Right ventricle myocardium inferior (tissue), 1 donor: ENCODE measurements at regions of chr12 and their contacts with region 1.

Region 1: GRCh38 chr12:32755654-32756475 is at the start of gene YARS2:
- DNase-seq: peak; percentile 96
- ATAC-seq: peak; percentile 100
- total RNA-seq, gene YARS2: 9.7 TPM

Region 2: DNA sequence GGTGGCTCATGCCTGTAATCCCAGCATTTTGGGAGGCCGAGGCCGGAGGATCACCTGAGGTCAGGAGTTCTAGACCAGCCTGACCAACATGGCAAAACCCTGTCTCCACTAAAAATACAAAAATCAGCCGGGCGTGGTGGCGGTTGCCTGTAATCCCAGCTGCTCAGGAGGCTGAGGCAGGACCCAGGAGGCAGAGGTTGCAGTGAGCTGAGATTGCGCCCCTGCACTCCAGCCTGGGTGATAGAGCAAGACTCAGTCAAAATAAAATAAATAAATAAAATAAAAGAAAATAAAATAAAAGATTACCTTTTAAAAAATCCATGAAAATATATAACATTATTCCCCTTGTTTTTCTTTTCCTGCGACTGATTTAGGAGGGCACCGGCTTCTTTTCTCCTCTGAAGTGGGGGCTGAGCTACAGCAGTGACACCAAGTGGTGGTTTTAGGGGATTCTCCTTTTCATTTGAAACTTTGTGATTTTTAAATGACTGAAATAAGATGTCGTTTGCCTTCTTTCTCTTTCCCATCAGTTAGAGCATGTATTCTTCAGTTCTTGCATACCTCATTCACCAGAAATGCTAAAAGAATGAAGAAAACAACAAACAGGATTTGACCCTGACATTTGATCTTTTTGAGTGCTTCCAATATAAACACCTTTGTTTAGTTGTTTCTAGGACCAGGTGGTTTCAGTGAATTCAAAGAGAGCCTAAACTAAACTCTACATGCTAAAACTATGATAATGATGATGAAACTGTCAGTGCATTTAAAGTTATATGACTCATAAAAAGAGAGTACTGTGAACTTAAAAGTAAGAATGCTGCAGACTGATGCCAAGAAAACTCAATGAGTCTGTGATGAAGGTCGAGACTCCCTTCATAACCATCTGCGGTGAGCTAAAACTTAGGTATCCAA is 163.3 kb after region 1 on chr12:
- intact Hi-C with region 1: loop called (anchors 1 kb)
- DNase-seq: no peak
- ATAC-seq: peak; percentile 71

Region 3: GRCh38 chr12:34022079-34022830 is 1266.4 kb after region 1 on chr12 and contains the start of gene ALG10:
- intact Hi-C with region 1: loop called (anchors 1 kb)
- DNase-seq: peak; percentile 95
- ATAC-seq: peak; percentile 100
- total RNA-seq, gene ALG10: 3.7 TPM